ENCODE measurements at regions of chr11 and their contacts with region 1.

Region 1: DNA sequence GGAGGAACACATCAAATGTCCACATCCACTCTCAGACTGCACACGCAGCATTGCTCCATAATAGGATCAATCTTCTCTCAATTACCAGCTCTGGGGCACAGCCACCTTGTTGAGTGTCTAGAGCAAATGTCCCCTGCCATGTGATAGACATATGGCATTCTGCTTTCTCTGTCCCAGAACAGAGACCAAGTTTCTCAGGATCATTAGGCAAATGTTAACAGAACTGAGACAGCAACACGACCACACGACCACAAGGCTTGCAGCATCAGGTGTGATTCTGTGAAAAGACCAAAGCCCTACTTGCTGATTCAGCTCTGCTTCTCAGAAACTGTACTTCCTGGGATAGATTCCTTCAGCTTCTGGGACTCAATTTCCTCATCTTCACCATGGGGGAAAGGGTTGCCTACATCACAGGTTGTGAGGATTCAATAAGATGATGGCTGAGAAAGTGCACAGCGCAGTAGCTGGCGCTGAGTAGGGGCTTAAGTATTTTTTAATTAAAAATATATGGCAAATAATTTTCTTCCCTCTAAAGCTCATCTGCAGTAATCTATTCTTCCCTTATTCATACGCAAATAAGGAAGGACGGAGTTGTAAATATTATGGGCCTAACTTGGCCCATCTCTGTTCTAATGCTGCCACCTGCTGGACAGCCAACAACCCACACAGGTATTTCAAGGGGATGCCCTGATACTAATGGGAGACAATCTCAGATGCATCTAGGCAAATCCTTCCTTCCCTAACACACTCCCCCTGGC is 54.3 kb upstream of the USP47 start:
- DNase-seq: peak; percentile 38
- ATAC-seq: peak; percentile 93
- H3K4me3 ChIP-seq: no peak overlapping the region
- H3K27ac ChIP-seq: no peak overlapping the region
- H3K4me1 ChIP-seq: no peaks in the 10 kb centered on the region
- H3K27me3 ChIP-seq: no peaks in the 10 kb centered on the region
- CTCF ChIP-seq: peak; percentile 81 to 91 (median 87)
- POLR2A ChIP-seq: no peak
- RAD21 ChIP-seq: peak; percentile 96

Region 2: DNA sequence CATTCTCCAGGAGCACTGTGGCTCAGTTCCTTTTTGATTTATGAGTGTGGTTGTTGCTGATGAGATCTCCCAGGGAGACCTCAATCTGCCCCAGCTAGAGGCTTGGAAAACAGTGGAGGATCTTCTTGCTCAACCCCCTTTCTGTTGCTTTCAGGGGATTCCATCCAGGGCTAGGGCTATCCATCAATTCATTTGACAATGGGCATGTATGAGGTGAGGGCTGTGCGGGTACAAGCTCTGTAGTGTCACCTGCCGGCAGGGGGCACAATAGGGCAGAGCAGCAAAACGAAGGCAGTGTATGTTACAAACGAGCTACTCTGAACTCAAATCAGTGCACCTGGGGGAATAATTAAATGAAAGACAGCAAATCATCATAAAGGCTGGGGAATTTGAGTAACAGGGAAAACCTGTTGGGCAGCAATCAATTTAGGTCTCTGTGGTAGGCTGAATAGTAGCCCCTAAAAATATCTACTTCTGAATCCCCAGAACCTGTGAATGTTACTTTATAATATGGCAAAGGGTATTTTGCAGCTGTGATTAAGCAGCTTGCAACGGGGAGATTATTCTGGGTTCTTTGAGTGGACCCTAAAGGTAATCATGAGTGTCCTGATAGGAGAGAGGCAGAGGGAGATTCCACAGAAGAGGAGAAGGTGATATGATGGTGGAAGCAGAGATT is 759.3 kb before region 1 on chr11:
- CTCF ChIA-PET with region 1: interaction called, 40 read pairs
- POLR2A ChIA-PET with region 1: interaction called, 5 read pairs
- RAD21 ChIA-PET with region 1: no interaction called
- intact Hi-C with region 1: loop called (anchors 1 kb)
- DNase-seq: peak; percentile 47
- ATAC-seq: peak; percentile 100
- H3K4me3 ChIP-seq: no peak overlapping the region
- H3K27ac ChIP-seq: no peak overlapping the region
- H3K4me1 ChIP-seq: peaks cover 0 to 6% of the 10 kb centered on the region in 2 experiments; a peak in 1 of 4 replicates
- H3K27me3 ChIP-seq: no peaks in the 10 kb centered on the region
- CTCF ChIP-seq: peak; percentile 76 to 95 (median 92)
- POLR2A ChIP-seq: no peak
- RAD21 ChIP-seq: peak; percentile 89

Region 3: GRCh38 chr11:11135820-11136465 is 651.5 kb before region 1 on chr11:
- CTCF ChIA-PET with region 1: no interaction called
- POLR2A ChIA-PET with region 1: no interaction called
- RAD21 ChIA-PET with region 1: no interaction called
- intact Hi-C with region 1: loop called (anchors 10 kb)
- DNase-seq: no peak
- ATAC-seq: no peak
- H3K4me3 ChIP-seq: no peak overlapping the region
- H3K27ac ChIP-seq: no peak overlapping the region
- H3K4me1 ChIP-seq: peaks cover 7 to 8% of the 10 kb centered on the region in 2 experiments; a peak in 3 of 4 replicates
- H3K27me3 ChIP-seq: no peaks in the 10 kb centered on the region
- CTCF ChIP-seq: no peak
- POLR2A ChIP-seq: no peak
- RAD21 ChIP-seq: no peak

Region 4: GRCh38 chr11:11265994-11266606 is 521.4 kb before region 1 on chr11:
- CTCF ChIA-PET with region 1: no interaction called
- POLR2A ChIA-PET with region 1: no interaction called
- RAD21 ChIA-PET with region 1: no interaction called
- intact Hi-C with region 1: loop called (anchors 10 kb)
- DNase-seq: peak; percentile 16
- ATAC-seq: peak; percentile 96
- H3K4me3 ChIP-seq: no peak overlapping the region
- H3K27ac ChIP-seq: no peak overlapping the region
- H3K4me1 ChIP-seq: peaks cover 4 to 29% of the 10 kb centered on the region in 2 experiments; a peak in 2 of 4 replicates
- H3K27me3 ChIP-seq: no peaks in the 10 kb centered on the region
- CTCF ChIP-seq: peak; percentile 67 to 99 (median 98); a peak in 5 of 6 replicates
- POLR2A ChIP-seq: no peak
- RAD21 ChIP-seq: peak; percentile 77

Region 5: GRCh38 chr11:11400635-11401232 is 386.8 kb before region 1 on chr11:
- CTCF ChIA-PET with region 1: interaction called, 12 read pairs
- POLR2A ChIA-PET with region 1: no interaction called
- RAD21 ChIA-PET with region 1: no interaction called
- intact Hi-C with region 1: loop called (anchors 1 kb)
- DNase-seq: peak; percentile 12
- ATAC-seq: peak; percentile 82
- H3K4me3 ChIP-seq: no peak overlapping the region
- H3K27ac ChIP-seq: no peak overlapping the region
- H3K4me1 ChIP-seq: no peaks in the 10 kb centered on the region
- H3K27me3 ChIP-seq: no peaks in the 10 kb centered on the region
- CTCF ChIP-seq: peak; percentile 38 to 63 (median 58); a peak in 5 of 6 replicates
- POLR2A ChIP-seq: no peak
- RAD21 ChIP-seq: peak; percentile 67

Region 6: DNA sequence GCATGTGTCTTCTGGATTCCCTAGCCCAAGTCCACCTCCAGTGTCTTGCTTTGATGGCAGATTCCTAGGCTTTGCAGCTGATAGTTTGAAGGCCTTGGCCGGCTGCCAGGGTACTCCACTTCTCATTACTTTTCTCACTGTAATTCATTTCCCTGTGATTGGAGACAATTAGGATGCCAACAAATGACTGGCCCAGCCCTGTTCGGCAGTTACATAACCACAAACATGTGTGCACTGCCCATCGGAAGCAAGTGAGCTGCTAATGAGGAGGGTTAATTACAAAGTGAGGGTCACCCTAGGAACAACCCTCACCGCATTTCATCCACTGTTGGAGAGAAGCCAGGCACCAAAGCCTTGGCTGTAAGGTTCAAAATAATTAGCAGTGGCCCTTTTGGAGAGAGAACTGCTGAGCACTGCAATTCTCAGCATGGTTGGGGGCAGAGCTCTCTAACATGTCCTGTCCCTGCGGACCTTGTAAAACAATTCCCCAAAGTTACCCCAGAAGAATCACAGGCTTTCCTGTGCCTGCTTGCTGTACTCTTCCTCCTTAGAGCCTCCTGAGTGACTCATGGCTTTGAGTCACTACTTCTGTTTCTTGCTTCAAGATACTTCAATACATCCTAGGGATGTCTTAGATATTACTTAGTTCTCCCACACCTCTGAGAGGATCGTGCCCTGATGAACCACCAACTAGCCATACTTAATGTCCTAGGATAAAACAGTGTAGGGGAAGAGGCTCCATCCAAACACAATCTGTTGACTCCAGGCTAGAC is 56.0 kb before region 1 on chr11:
- CTCF ChIA-PET with region 1: no interaction called
- POLR2A ChIA-PET with region 1: no interaction called
- RAD21 ChIA-PET with region 1: no interaction called
- intact Hi-C with region 1: no loop called
- DNase-seq: peak; percentile 68
- ATAC-seq: peak; percentile 90
- H3K4me3 ChIP-seq: peak overlapping the region in 1 of 2 experiments; percentile 23; a peak in 2 of 4 replicates
- H3K27ac ChIP-seq: peak overlapping the region; percentile 33
- H3K4me1 ChIP-seq: peaks cover 18 to 23% of the 10 kb centered on the region in 2 experiments
- H3K27me3 ChIP-seq: no peaks in the 10 kb centered on the region
- CTCF ChIP-seq: no peak
- POLR2A ChIP-seq: no peak
- RAD21 ChIP-seq: no peak

Region 7: DNA sequence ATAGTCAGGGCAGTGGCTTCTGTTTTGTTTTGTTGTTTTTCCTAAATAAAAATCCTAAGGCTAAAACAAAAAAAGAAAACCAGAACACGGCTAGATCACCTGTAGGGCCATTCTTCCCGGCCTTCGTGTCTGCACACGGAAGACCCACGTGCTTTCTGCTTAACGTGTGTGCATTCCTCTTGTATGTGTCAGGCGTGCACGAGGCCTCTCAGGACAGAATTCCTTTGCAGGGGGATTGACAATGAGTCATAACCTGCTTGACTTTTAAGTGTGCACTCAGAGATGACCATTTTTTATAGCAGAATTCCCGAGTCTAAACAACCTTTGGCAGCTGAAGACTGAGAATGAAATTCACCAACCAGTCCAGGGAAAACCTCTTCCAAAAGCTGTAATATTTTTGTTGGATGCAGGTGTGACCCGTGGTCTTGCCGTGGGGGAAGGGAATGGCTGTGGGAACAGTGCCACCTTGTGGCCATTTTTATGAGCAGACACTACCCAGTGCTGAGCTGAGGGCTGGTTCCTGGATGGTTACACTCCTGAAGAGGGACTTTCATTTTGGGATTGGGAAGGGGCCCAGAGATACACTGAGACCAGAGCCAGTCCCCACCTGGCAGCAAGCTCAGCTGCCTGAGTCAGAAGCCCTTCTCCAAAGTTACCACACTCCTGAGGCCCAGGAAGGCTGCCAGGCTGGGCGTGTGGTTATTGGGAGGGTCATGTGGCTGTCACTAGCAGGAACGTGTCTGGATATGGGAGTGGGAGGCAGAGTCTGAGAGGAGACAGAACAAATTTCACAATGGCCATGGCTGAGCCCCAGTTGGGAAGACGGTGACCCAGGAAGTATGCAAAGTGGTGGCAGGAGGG is 256.7 kb after region 1 on chr11:
- CTCF ChIA-PET with region 1: interaction called, 4 read pairs
- POLR2A ChIA-PET with region 1: no interaction called
- RAD21 ChIA-PET with region 1: no interaction called
- intact Hi-C with region 1: loop called (anchors 1 kb)
- DNase-seq: peak; percentile 92
- ATAC-seq: peak; percentile 88
- H3K4me3 ChIP-seq: peak overlapping the region; percentile 27 to 43; a peak in 3 of 4 replicates
- H3K27ac ChIP-seq: peak overlapping the region; percentile 51; the same call in 1 of the 2 replicates
- H3K4me1 ChIP-seq: peaks cover 8 to 45% of the 10 kb centered on the region in 2 experiments; a peak in 2 of 4 replicates
- H3K27me3 ChIP-seq: no peaks in the 10 kb centered on the region
- CTCF ChIP-seq: peak; percentile 84 to 97 (median 93)
- POLR2A ChIP-seq: no peak
- RAD21 ChIP-seq: peak; percentile 99

Measured in HCT116 (cell line).